HAP-1 (cell line): ENCODE measurements at regions of chr3 and their contacts with region 1.

Region 1: GRCh38 chr3:150495563-150496168 is 50.6 kb downstream of the SERP1 start:
- DNase-seq: peak; percentile 29 to 63
- H3K4me3 ChIP-seq: no peak overlapping the region
- H3K4me1 ChIP-seq: no peaks in the 10 kb centered on the region
- H3K27me3 ChIP-seq: no peaks in the 10 kb centered on the region

Region 2: DNA sequence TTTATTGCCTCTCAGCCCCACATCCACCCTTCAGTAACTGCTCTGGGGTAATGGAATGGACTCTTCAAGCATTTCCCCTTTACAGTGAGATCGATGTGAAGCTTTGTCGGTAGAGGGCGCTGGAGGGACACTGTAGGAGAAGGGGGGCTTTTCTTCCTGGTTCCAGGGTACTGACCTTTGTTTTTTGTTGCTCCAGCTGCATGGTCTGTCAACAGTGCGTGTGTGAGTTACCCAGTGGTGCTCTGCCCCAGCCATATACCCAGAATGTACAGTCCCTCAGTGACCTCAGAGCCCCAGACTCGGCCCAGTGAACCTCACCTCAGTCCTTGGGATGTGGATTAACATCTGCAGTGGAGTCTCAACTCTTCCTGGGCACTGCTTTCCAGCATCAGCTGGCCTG is 267.8 kb before region 1 on chr3:
- in situ Hi-C with region 1: loop called (anchors 5 kb)
- DNase-seq: peak; percentile 61 to 92
- H3K4me3 ChIP-seq: no peak overlapping the region
- H3K4me1 ChIP-seq: peaks cover 4% of the 10 kb centered on the region
- H3K27me3 ChIP-seq: no peaks in the 10 kb centered on the region